Astrocyte of the cerebellum (primary cell): ENCODE measurements at regions of chr12 and their contacts with region 1.

Region 1: GRCh38 chr12:55372521-55372920 is 9.7 kb downstream of the OR6C75 start:
- DNase-seq: no peak
- H3K4me3 ChIP-seq: no peak overlapping the region
- CTCF ChIP-seq: no peak

Region 2: DNA sequence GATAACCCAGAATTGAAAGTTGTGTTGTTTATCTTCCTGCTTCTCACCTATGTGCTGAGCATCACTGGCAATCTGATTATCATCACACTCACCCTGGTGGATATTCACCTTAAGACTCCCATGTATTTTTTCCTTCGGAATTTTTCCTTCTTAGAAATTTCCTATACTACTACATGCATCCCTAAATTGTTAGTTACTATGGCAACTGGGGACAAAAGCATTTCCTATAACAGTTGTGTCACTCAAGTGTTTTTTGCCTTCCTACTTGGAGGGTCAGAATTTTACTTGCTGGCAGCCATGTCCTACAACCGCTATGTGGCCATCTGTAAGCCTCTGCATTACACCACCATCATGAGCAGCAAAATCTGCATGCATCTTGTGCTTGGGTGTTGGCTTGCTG is 109.9 kb before region 1 on chr12:
- in situ Hi-C with region 1: no loop called
- DNase-seq: no peak
- H3K4me3 ChIP-seq: no peak overlapping the region
- CTCF ChIP-seq: no peak

Region 3: DNA sequence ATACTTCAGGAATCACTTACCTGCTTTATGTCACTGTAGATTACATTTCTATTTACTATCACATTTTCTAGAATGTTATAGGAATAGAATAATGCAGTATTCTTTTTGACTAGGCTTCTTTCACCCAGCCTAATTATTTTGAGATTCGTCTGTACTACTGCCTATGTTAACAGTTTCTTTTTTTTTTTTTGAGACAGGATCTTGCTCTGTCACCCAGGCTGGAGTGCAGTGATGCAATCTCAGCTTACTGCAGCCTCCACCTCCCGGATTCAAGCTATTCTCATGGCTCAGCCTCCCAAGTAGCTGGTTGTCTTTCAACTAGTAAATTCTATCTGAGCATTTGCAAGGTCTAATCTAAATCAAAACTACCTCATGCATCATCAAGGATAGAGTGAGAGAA is 82.5 kb before region 1 on chr12:
- in situ Hi-C with region 1: no loop called
- DNase-seq: no peak
- H3K4me3 ChIP-seq: no peak overlapping the region
- CTCF ChIP-seq: no peak

Region 4: GRCh38 chr12:55320201-55320600 is 52.3 kb before region 1 on chr12:
- in situ Hi-C with region 1: loop called (anchors 5 kb)
- DNase-seq: no peak
- H3K4me3 ChIP-seq: no peak overlapping the region
- CTCF ChIP-seq: no peak

Region 5: DNA sequence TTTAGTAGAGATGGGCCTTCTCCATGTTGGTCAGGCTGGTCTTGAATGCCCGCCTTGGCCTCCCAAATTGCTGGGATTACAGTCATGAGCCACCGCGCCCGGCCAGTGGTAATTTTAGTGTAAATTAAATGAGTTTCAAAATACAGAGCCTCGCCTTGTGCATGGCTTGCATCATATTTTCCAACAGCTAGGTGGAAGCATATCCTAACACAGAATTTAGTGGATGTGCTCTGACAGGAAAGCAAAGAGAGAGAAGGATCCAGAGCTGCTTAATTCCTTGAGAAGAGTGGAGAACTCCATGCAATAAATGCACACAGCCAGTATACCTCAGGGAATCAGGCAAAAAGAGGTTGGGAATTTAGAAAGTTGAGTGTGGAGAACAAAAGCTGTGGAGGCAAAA is 73.8 kb after region 1 on chr12:
- in situ Hi-C with region 1: no loop called
- DNase-seq: no peak
- H3K4me3 ChIP-seq: no peak overlapping the region
- CTCF ChIP-seq: no peak

Region 6: DNA sequence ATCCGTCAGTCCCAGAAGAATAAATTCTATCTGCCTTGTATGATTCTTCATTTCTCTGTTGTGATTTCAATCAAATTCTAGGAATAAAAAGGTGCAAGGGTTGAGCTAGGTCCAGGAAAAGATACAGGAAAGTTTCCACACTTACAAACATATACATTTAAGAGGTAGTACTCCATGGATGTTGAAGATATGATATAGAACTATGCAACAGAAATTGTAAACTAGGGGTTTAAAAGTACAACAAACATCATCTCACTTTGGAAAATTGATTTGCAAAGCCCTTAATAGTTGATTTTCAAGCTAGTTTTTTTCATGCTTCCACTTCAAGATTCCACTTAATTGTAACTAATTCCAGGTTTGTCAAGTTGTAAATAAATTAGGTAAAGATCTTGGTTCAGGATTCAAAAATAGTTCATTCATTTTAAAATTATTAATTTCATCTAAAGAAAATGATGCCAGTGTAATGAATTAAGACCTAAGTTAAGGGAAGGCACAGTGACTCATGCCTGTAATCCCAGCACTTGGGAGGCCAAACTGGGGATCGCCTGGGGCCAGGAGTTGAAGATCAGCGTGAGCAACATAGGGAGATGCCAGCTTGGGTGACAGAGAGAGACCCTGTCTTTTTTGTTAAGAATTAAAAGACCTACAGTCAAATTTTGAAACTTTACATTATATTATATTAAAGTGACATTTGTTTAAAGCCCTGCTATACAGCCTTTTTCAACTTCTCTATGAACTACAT is 97.7 kb after region 1 on chr12 and contains the start of gene OR6C70:
- in situ Hi-C with region 1: loop called (anchors 5 kb)
- DNase-seq: no peak
- H3K4me3 ChIP-seq: no peak within 1 kb of the TSS
- CTCF ChIP-seq: no peak